ENCODE measurements at regions of chr2 and their contacts with region 1.

Region 1: DNA sequence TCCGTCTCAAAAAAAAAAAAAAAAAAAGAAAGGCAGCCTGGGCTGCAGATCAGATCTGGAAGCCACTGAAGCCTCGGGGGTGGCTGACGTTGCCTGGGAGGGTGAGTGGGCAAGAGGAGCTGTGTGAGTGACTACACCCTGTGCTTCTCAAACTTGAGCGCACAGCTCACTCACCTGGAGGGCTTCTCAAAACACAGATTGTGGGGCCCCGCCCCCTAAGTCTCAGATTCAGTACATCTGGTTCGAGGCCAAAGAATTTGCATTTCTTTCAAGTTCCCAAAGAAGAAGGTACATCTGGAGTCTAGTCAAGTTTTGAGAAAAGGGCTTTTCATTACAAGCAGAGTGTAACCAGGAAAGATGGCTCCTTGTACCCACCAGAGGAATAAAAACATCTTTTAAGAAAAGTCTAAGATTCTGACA is 97.7 kb upstream of the CAB39 start:
- DNase-seq: no peak
- ATAC-seq: peak; percentile 70 to 81
- H3K4me3 ChIP-seq: no peak overlapping the region
- H3K27ac ChIP-seq: no peak overlapping the region
- H3K4me1 ChIP-seq: peaks cover 5% of the 10 kb centered on the region
- H3K27me3 ChIP-seq: no peaks in the 10 kb centered on the region
- CTCF ChIP-seq: no peak

Region 2: GRCh38 chr2:230007931-230008707 is 606.8 kb before region 1 on chr2:
- intact Hi-C with region 1: loop called (anchors 10 kb)
- DNase-seq: peak; percentile 77
- ATAC-seq: peak; percentile 67 to 71
- H3K4me3 ChIP-seq: peak overlapping the region; percentile 6
- H3K27ac ChIP-seq: no peak overlapping the region
- H3K4me1 ChIP-seq: peaks cover 8% of the 10 kb centered on the region
- H3K27me3 ChIP-seq: no peaks in the 10 kb centered on the region
- CTCF ChIP-seq: peak; percentile 86

Region 3: GRCh38 chr2:230282936-230283335 is 332.0 kb before region 1 on chr2:
- intact Hi-C with region 1: no loop called
- DNase-seq: no peak
- ATAC-seq: no peak
- H3K4me3 ChIP-seq: no peak overlapping the region
- H3K27ac ChIP-seq: no peak overlapping the region
- H3K4me1 ChIP-seq: no peaks in the 10 kb centered on the region
- H3K27me3 ChIP-seq: no peaks in the 10 kb centered on the region
- CTCF ChIP-seq: no peak

Region 4: DNA sequence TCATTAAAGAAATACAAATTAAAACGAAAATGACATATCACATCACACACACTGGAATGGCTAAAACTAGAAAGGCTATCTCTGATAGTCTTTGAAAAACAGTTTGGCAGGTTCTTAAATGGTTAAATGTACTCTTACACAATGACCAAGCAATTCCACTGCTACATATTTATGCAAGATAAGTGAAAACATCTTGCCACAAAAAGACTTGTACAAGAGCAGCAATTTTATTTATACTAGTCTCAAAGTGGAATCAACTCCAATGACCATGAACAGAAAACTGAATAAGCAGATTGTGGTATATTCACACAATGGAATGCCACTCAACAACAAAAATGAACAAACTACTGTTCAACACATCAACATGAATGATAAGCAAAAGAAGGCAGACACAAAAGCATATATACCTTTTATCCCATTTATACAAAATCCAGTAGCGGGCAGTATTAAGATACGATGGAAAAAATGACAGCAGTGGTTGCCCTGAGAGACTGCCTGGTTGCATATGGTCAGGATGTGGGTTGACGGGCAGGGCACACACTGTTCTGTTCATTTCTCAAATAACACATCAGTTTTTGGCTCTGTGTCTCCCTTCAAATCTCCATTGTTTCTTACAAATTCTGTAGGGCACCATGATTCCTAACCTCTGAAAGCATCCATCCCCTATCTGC is 173.6 kb before region 1 on chr2:
- intact Hi-C with region 1: no loop called
- DNase-seq: no peak
- ATAC-seq: peak; percentile 82 to 89
- H3K4me3 ChIP-seq: no peak overlapping the region
- H3K27ac ChIP-seq: peak overlapping the region; percentile 63
- H3K4me1 ChIP-seq: peaks cover 30% of the 10 kb centered on the region
- H3K27me3 ChIP-seq: no peaks in the 10 kb centered on the region
- CTCF ChIP-seq: no peak

Measured in lower lobe of right lung (tissue), 2 donors.